ENCODE measurements at regions of chr16 and their contacts with region 1.

Region 1: GRCh38 chr16:69917739-69918138 is 33.4 kb upstream of the CLEC18A start:
- DNase-seq: peak; percentile 84 to 90
- ATAC-seq: peak; percentile 72
- H3K4me3 ChIP-seq: no peak overlapping the region
- H3K27ac ChIP-seq: peak overlapping the region; percentile 60 to 80
- H3K4me1 ChIP-seq: peaks cover 2 to 9% of the 10 kb centered on the region in 2 donors
- H3K27me3 ChIP-seq: no peaks in the 10 kb centered on the region

Region 2: GRCh38 chr16:69799611-69800031 is 118.1 kb before region 1 on chr16:
- intact Hi-C with region 1: no loop called
- DNase-seq: no peak
- ATAC-seq: no peak
- H3K4me3 ChIP-seq: no peak overlapping the region
- H3K27ac ChIP-seq: no peak overlapping the region
- H3K4me1 ChIP-seq: no peaks in the 10 kb centered on the region
- H3K27me3 ChIP-seq: no peaks in the 10 kb centered on the region

Region 3: DNA sequence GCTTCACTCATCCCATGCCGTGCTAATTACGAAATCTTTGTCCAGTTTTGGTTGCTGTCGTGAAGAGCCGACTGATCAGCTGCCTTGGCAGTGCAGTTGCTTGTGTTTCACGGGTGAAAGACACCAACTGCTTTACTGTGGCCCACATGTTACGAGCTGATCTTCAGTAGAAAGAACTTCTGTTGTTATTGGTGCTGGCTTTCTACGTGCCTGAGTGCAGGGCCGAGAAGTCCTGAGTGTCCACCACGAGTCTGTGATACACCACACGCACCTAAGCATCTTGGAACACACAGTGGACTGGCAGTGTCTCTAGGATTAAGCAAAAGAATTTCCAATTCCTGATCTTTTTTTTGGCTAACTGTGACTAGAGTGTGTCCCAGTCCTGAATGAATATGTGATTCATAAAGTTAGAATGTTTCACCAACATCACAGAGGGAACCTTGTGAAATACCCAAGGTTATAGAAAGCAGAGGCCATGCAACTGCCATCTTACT is 37.1 kb before region 1 on chr16:
- intact Hi-C with region 1: loop called in 1 of 2 experiments (anchors 5 kb)
- DNase-seq: no peak
- ATAC-seq: no peak
- H3K4me3 ChIP-seq: no peak overlapping the region
- H3K27ac ChIP-seq: peak overlapping the region in 1 of 2 donors; percentile 78
- H3K4me1 ChIP-seq: peaks cover 0 to 2% of the 10 kb centered on the region in 2 donors
- H3K27me3 ChIP-seq: no peaks in the 10 kb centered on the region

Region 4: GRCh38 chr16:69890892-69891282 is 26.9 kb before region 1 on chr16:
- intact Hi-C with region 1: no loop called
- DNase-seq: no peak
- ATAC-seq: peak; percentile 3
- H3K4me3 ChIP-seq: no peak overlapping the region
- H3K27ac ChIP-seq: peak overlapping the region; percentile 49 to 61
- H3K4me1 ChIP-seq: peaks cover 0 to 3% of the 10 kb centered on the region in 2 donors
- H3K27me3 ChIP-seq: no peaks in the 10 kb centered on the region